MCF 10A (cell line): ENCODE measurements at regions of chr5 and their contacts with region 1.

Region 1: GRCh38 chr5:146158257-146158656 is 24.2 kb downstream of the LARS1 start:
- DNase-seq: no peak
- H3K4me3 Mint-ChIP-seq: no peak overlapping the region
- H3K27ac Mint-ChIP-seq: no peak overlapping the region
- H3K4me1 Mint-ChIP-seq: peaks cover under 1% of the 10 kb centered on the region
- H3K27me3 Mint-ChIP-seq: no peaks in the 10 kb centered on the region
- CTCF ChIP-seq: no peak

Region 2: DNA sequence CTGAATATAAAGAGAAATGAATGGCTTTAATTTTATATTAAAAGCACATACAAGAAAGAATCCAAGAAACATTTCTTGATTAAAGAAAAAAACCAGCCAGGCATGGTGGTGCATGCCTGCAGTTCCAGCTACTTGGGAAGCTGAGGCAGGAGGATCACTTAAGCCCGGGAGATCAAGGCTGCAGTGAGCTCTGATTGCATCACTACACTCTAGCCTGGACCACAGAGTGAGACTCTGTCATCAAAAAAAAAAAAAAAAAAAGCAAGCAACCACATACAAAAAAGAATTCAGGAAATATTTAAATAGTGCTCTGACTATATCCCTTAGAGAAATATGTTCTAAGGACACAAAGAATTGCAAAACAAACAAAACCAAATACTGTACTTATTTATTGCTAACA is 50.4 kb before region 1 on chr5:
- CTCF ChIA-PET with region 1: no interaction called
- POLR2A ChIA-PET with region 1: no interaction called
- intact Hi-C with region 1: no loop called
- DNase-seq: no peak
- H3K4me3 Mint-ChIP-seq: no peak overlapping the region
- H3K27ac Mint-ChIP-seq: no peak overlapping the region
- H3K4me1 Mint-ChIP-seq: peaks cover 6% of the 10 kb centered on the region
- H3K27me3 Mint-ChIP-seq: no peaks in the 10 kb centered on the region
- CTCF ChIP-seq: no peak

Region 3: GRCh38 chr5:146124580-146124979 is 33.7 kb before region 1 on chr5:
- CTCF ChIA-PET with region 1: interaction called, 3 read pairs
- POLR2A ChIA-PET with region 1: interaction called, 3 read pairs
- intact Hi-C with region 1: loop called (anchors 5 kb)
- DNase-seq: no peak
- H3K4me3 Mint-ChIP-seq: no peak overlapping the region
- H3K27ac Mint-ChIP-seq: no peak overlapping the region
- H3K4me1 Mint-ChIP-seq: no peaks in the 10 kb centered on the region
- H3K27me3 Mint-ChIP-seq: no peaks in the 10 kb centered on the region
- CTCF ChIP-seq: no peak

Region 4: GRCh38 chr5:146203011-146203871 is 45.0 kb after region 1 on chr5 and contains the start of gene RBM27:
- CTCF ChIA-PET with region 1: no interaction called
- POLR2A ChIA-PET with region 1: no interaction called
- intact Hi-C with region 1: no loop called
- DNase-seq: peak; percentile 100
- H3K4me3 Mint-ChIP-seq: no peak within 1 kb of the TSS
- H3K27ac Mint-ChIP-seq: no peak within 1 kb of the TSS
- H3K4me1 Mint-ChIP-seq: peaks cover 5% of the 10 kb centered on the region
- H3K27me3 Mint-ChIP-seq: no peaks in the 10 kb centered on the region
- CTCF ChIP-seq: no peak
- total RNA-seq, gene RBM27: 25.6 and 27.9 TPM in 2 replicates